ENCODE measurements at regions of chr10 and their contacts with region 1.

Region 1: GRCh38 chr10:48389272-48389671 is 82.8 kb downstream of the MAPK8 start:
- DNase-seq: no peak
- H3K4me3 ChIP-seq: no peak overlapping the region
- H3K27ac ChIP-seq: no peak overlapping the region
- H3K4me1 ChIP-seq: peaks cover 19% of the 10 kb centered on the region
- H3K27me3 ChIP-seq: no peaks in the 10 kb centered on the region
- CTCF ChIP-seq: no peak

Region 2: GRCh38 chr10:48306265-48306869 is 82.9 kb before region 1 on chr10 and contains the start of gene MAPK8:
- CTCF ChIA-PET with region 1: no interaction called
- POLR2A ChIA-PET with region 1: no interaction called
- intact Hi-C with region 1: loop called (anchors 10 kb)
- DNase-seq: peak; percentile 93
- H3K4me3 ChIP-seq: peak within 1 kb of the TSS; percentile 88
- H3K27ac ChIP-seq: peak within 1 kb of the TSS; percentile 87
- H3K4me1 ChIP-seq: peaks cover 13% of the 10 kb centered on the region
- H3K27me3 ChIP-seq: no peaks in the 10 kb centered on the region
- CTCF ChIP-seq: no peak
- total RNA-seq, gene MAPK8: 50.3 and 52.0 TPM in 2 replicates

Measured in A673 (cell line).